GM12878 (cell line): ENCODE measurements at regions of chr10 and their contacts with region 1.

Region 1: DNA sequence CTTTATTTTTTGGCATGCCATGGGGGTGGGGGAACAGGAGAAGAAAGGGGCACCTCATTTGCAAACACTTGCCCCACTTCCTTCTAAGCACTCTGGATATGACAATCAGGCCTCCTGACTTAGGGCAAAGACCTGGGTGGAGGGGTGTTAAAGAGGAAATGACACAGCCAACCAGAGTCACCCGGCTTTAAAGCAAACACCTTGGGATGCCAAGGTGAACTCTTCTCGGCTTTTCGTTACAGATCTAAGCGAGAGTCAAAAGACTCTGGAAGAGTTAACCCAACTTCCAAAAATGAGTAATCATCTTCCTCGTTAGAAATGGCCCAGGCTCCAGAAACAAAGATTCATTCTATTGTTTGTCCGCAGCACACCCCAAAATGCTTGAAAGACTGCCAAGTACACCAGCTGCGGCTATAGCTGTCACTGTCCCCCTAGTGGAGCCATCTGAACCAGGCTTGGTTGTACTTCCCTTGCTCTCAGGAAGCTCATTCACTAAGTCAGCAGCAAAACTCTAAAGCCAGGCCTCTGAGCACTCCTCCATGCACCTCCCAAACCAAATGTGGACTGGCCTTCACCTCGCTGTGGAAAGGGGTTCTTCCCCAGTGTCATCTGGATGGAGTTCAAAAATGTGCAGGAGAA is 24.8 kb downstream of the FAM53B start:
- DNase-seq: peak; percentile 87
- ATAC-seq: peak; percentile 63
- H3K4me3 ChIP-seq: peak overlapping the region; percentile 57; the same call in 1 of the 2 replicates
- H3K27ac ChIP-seq: peak overlapping the region; percentile 71
- H3K4me1 ChIP-seq: peaks cover 69% of the 10 kb centered on the region
- H3K27me3 ChIP-seq: no peaks in the 10 kb centered on the region
- CTCF ChIP-seq: peak; percentile 56 to 72 (median 65)
- EP300 ChIP-seq: peak; percentile 75 to 88; a peak in 3 of 4 replicates
- POLR2A ChIP-seq: no peak
- RAD21 ChIP-seq: peak; percentile 65

Region 2: GRCh38 chr10:123402656-123403055 is 1316.7 kb before region 1 on chr10:
- CTCF ChIA-PET with region 1: no interaction called
- POLR2A ChIA-PET with region 1: no interaction called
- RAD21 ChIA-PET with region 1: no interaction called
- SMC1A ChIA-PET with region 1: no interaction called
- in situ Hi-C with region 1: loop called (anchors 10 kb)
- intact Hi-C with region 1: no loop called
- DNase-seq: peak; percentile 97
- ATAC-seq: peak; percentile 80
- H3K4me3 ChIP-seq: peak overlapping the region; percentile 18; the same call in 1 of the 2 replicates
- H3K27ac ChIP-seq: peak overlapping the region; percentile 97
- H3K4me1 ChIP-seq: peaks cover 56% of the 10 kb centered on the region
- H3K27me3 ChIP-seq: no peaks in the 10 kb centered on the region
- CTCF ChIP-seq: no peak
- EP300 ChIP-seq: peak; percentile 91 to 94
- POLR2A ChIP-seq: peak; percentile 55
- RAD21 ChIP-seq: peak; percentile 30

Region 3: DNA sequence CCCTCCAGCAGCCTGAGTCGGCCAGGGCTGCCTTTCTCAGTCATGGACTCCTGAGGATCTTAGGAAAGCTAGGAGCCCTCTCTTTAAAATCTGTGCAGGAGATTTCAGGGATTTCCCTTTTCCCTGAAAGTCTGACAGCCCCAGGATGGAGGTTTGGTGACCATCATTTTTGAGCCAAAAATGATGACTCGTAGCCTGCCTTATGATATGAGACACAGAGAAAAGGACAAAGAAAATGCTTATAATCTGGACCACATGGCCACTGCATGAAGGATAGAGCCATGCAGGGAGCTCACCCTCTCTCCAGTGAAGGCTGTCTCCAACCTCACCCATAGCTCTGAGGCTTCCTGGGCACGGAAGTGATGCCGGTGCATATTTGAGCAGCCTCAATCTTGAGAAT is 519.3 kb before region 1 on chr10:
- CTCF ChIA-PET with region 1: no interaction called
- POLR2A ChIA-PET with region 1: no interaction called
- RAD21 ChIA-PET with region 1: no interaction called
- SMC1A ChIA-PET with region 1: no interaction called
- in situ Hi-C with region 1: no loop called
- intact Hi-C with region 1: no loop called
- DNase-seq: no peak
- ATAC-seq: no peak
- H3K4me3 ChIP-seq: no peak overlapping the region
- H3K27ac ChIP-seq: no peak overlapping the region
- H3K4me1 ChIP-seq: 0 out of 2 replicates have a peak, but pooled peaks cover 2% of the 10 kb centered on the region
- H3K27me3 ChIP-seq: no peaks in the 10 kb centered on the region
- CTCF ChIP-seq: no peak
- EP300 ChIP-seq: no peak
- POLR2A ChIP-seq: no peak
- RAD21 ChIP-seq: no peak

Region 4: GRCh38 chr10:124619195-124619594 is 100.1 kb before region 1 on chr10:
- CTCF ChIA-PET with region 1: interaction called, 5 read pairs
- POLR2A ChIA-PET with region 1: no interaction called
- RAD21 ChIA-PET with region 1: interaction called, 10 read pairs
- SMC1A ChIA-PET with region 1: interaction called, 11 read pairs
- in situ Hi-C with region 1: no loop called
- intact Hi-C with region 1: loop called (anchors 1 kb)
- DNase-seq: no peak
- ATAC-seq: peak; percentile 68
- H3K4me3 ChIP-seq: peak overlapping the region; percentile 49; the same call in 1 of the 2 replicates
- H3K27ac ChIP-seq: peak overlapping the region; percentile 25
- H3K4me1 ChIP-seq: peaks cover 44% of the 10 kb centered on the region
- H3K27me3 ChIP-seq: no peaks in the 10 kb centered on the region
- CTCF ChIP-seq: no peak
- EP300 ChIP-seq: no peak
- POLR2A ChIP-seq: no peak
- RAD21 ChIP-seq: no peak

Region 5: GRCh38 chr10:124647421-124648130 is 71.8 kb before region 1 on chr10:
- CTCF ChIA-PET with region 1: interaction called, 31 read pairs
- POLR2A ChIA-PET with region 1: interaction called, 9 read pairs
- RAD21 ChIA-PET with region 1: interaction called, 29 read pairs
- SMC1A ChIA-PET with region 1: interaction called, 35 read pairs
- in situ Hi-C with region 1: no loop called
- intact Hi-C with region 1: no loop called
- DNase-seq: peak; percentile 50
- ATAC-seq: peak; percentile 79
- H3K4me3 ChIP-seq: no peak overlapping the region
- H3K27ac ChIP-seq: peak overlapping the region; percentile 87
- H3K4me1 ChIP-seq: peaks cover 49% of the 10 kb centered on the region
- H3K27me3 ChIP-seq: no peaks in the 10 kb centered on the region
- CTCF ChIP-seq: peak; percentile 37 to 41 (median 40); a peak in 5 of 6 replicates
- EP300 ChIP-seq: no peak; a peak in 1 of 4 replicates
- POLR2A ChIP-seq: no peak
- RAD21 ChIP-seq: peak; percentile 43

Region 6: GRCh38 chr10:124697830-124698544 is 21.3 kb before region 1 on chr10:
- CTCF ChIA-PET with region 1: interaction called, 63 read pairs
- POLR2A ChIA-PET with region 1: interaction called, 54 read pairs
- RAD21 ChIA-PET with region 1: interaction called, 309 read pairs
- SMC1A ChIA-PET with region 1: interaction called, 334 read pairs
- in situ Hi-C with region 1: no loop called
- intact Hi-C with region 1: loop called (anchors 1 kb)
- DNase-seq: no peak
- ATAC-seq: peak; percentile 69
- H3K4me3 ChIP-seq: no peak overlapping the region
- H3K27ac ChIP-seq: peak overlapping the region; percentile 94
- H3K4me1 ChIP-seq: peaks cover 77% of the 10 kb centered on the region
- H3K27me3 ChIP-seq: no peaks in the 10 kb centered on the region
- CTCF ChIP-seq: no peak
- EP300 ChIP-seq: 0 out of 4 replicates have a peak, but pooled peaks of 1 of the 2 experiments have one; percentile 41
- POLR2A ChIP-seq: no peak
- RAD21 ChIP-seq: no peak

Region 7: DNA sequence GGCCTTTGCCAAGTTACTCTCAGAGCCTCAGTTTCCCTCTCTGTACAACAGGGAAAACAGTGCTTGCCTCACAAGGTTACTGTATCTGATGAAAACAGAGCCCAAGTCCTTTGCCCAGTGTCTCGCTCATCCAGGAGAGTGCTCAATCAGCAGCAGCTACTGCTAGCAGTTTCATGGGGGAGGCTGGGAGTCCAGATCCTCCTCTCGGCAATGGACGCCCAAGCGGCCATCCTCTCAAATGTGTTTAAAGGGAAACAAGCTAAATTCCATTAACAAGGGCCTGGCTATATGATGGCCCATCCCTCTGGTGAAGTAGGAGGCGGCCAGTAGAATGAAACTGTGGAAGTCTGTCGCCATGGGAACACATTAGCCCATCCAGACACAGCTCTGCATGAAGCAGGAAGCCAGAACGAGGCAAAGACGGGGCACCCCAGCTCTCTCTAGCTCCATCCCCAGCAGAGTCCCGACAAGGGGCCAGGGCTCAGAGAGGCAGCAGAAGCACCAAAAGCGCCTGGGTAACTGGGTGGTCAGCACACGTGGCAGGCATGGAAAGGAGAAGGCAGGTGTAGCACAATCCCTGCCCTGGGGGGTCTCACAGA is 10.3 kb before region 1 on chr10:
- CTCF ChIA-PET with region 1: interaction called, 26 read pairs
- POLR2A ChIA-PET with region 1: interaction called, 5 read pairs
- RAD21 ChIA-PET with region 1: interaction called, 266 read pairs
- SMC1A ChIA-PET with region 1: interaction called, 38 read pairs
- in situ Hi-C with region 1: no loop called
- intact Hi-C with region 1: no loop called
- DNase-seq: no peak
- ATAC-seq: no peak
- H3K4me3 ChIP-seq: no peak overlapping the region
- H3K27ac ChIP-seq: no peak overlapping the region
- H3K4me1 ChIP-seq: peaks cover 5% of the 10 kb centered on the region
- H3K27me3 ChIP-seq: no peaks in the 10 kb centered on the region
- CTCF ChIP-seq: no peak
- EP300 ChIP-seq: no peak
- POLR2A ChIP-seq: no peak
- RAD21 ChIP-seq: no peak

Region 8: GRCh38 chr10:124748166-124748565 is 28.8 kb after region 1 on chr10:
- CTCF ChIA-PET with region 1: interaction called, 319 read pairs
- POLR2A ChIA-PET with region 1: interaction called, 134 read pairs
- RAD21 ChIA-PET with region 1: interaction called, 360 read pairs
- SMC1A ChIA-PET with region 1: interaction called, 351 read pairs
- in situ Hi-C with region 1: no loop called
- intact Hi-C with region 1: no loop called
- DNase-seq: no peak
- ATAC-seq: no peak
- H3K4me3 ChIP-seq: no peak overlapping the region
- H3K27ac ChIP-seq: no peak overlapping the region
- H3K4me1 ChIP-seq: peaks cover 4% of the 10 kb centered on the region; the same call in 1 of the 2 replicates
- H3K27me3 ChIP-seq: no peaks in the 10 kb centered on the region
- CTCF ChIP-seq: no peak
- EP300 ChIP-seq: no peak
- POLR2A ChIP-seq: no peak
- RAD21 ChIP-seq: no peak

Region 9: DNA sequence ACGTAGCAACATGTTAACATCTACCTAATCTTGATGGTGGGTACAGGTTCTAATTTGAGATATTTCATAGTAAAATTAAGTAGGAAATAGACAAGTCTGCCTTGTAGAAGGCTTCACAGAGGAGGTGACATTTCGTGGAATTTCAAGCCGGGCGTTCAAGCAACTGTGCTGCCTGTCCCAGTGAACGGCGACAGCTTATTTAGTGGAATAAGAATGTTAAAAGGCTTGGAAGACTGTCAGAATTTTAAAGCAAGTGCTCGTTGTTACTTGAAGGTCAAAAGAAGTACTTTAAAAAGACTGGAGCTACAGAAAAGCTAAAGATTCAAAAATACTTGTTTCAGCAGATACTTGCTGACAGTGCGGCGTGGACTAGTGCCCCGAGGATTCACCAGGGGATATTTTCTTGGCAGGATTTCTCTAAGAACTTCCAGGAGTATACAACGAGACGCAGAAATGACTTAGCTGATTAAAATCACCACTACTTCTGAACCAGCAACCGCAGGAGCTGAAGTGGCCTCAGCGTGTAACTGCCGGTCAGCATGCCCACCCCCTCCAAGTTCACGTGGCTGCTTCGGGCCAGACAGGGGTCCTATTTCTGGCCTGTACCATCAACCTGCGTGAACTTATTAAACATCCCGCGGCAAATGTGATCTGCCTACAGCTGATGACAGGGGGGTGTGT is 394.5 kb after region 1 on chr10:
- CTCF ChIA-PET with region 1: no interaction called
- POLR2A ChIA-PET with region 1: no interaction called
- RAD21 ChIA-PET with region 1: no interaction called
- SMC1A ChIA-PET with region 1: no interaction called
- in situ Hi-C with region 1: no loop called
- intact Hi-C with region 1: no loop called
- DNase-seq: no peak
- ATAC-seq: no peak
- H3K4me3 ChIP-seq: no peak overlapping the region
- H3K27ac ChIP-seq: no peak overlapping the region
- H3K4me1 ChIP-seq: no peaks in the 10 kb centered on the region
- H3K27me3 ChIP-seq: no peaks in the 10 kb centered on the region; a peak in 1 of 4 replicates
- CTCF ChIP-seq: no peak
- EP300 ChIP-seq: no peak
- POLR2A ChIP-seq: no peak
- RAD21 ChIP-seq: no peak